IMR-90 (cell line): ENCODE measurements at regions of chr7 and their contacts with region 1.

Region 1: GRCh38 chr7:24757353-24758275 is at the start of gene GSDME:
- DNase-seq: peak; percentile 51
- ATAC-seq: peak; percentile 94
- H3K4me3 ChIP-seq: peak within 1 kb of the TSS; percentile 76
- H3K27ac ChIP-seq: peak within 1 kb of the TSS; percentile 86
- H3K4me1 ChIP-seq: peaks cover 13% of the 10 kb centered on the region
- H3K27me3 ChIP-seq: no peaks in the 10 kb centered on the region
- CTCF ChIP-seq: 0 out of 2 replicates have a peak, but pooled peaks have one; percentile 10
- POLR2A ChIP-seq: no peak
- RAD21 ChIP-seq: no peak
- total RNA-seq, gene GSDME: 78.7 and 88.3 TPM in 2 replicates

Region 2: GRCh38 chr7:24741691-24742504 is 15.7 kb before region 1 on chr7:
- CTCF ChIA-PET with region 1: no interaction called
- POLR2A ChIA-PET with region 1: no interaction called
- dilution Hi-C with region 1: no loop called
- in situ Hi-C with region 1: no loop called
- intact Hi-C with region 1: loop called (anchors 2 kb)
- DNase-seq: peak; percentile 99
- ATAC-seq: peak; percentile 98
- H3K4me3 ChIP-seq: no peak overlapping the region
- H3K27ac ChIP-seq: peak overlapping the region; percentile 92
- H3K4me1 ChIP-seq: peaks cover 18% of the 10 kb centered on the region
- H3K27me3 ChIP-seq: no peaks in the 10 kb centered on the region
- CTCF ChIP-seq: no peak
- POLR2A ChIP-seq: no peak
- RAD21 ChIP-seq: no peak; the same call in 1 of the 2 replicates

Region 3: GRCh38 chr7:25319707-25320106 is 562.1 kb after region 1 on chr7:
- CTCF ChIA-PET with region 1: no interaction called
- POLR2A ChIA-PET with region 1: no interaction called
- dilution Hi-C with region 1: no loop called
- in situ Hi-C with region 1: no loop called
- intact Hi-C with region 1: no loop called
- DNase-seq: no peak
- ATAC-seq: no peak
- H3K4me3 ChIP-seq: no peak overlapping the region
- H3K27ac ChIP-seq: no peak overlapping the region
- H3K4me1 ChIP-seq: no peaks in the 10 kb centered on the region
- H3K27me3 ChIP-seq: no peaks in the 10 kb centered on the region
- CTCF ChIP-seq: no peak
- POLR2A ChIP-seq: no peak
- RAD21 ChIP-seq: no peak

Region 4: DNA sequence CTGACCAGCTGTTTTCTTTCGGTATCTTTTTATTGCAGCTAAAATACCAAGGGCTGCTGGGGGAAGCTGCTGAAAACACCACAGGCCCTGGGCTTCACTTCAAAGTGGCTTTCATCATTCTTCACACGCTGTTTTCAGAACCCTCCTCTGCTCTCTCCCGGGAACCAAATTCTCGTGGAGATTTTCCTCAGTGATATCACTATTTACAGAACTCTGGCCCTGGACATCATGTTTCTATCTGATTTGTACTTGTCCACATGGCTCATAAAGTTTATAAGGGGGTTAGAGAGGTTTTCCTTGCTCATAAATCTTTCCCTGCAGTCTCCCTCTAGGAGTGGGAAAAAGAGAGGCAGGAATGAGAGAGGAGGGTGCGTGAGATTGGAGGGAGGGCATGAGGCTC is 648.1 kb after region 1 on chr7:
- CTCF ChIA-PET with region 1: no interaction called
- POLR2A ChIA-PET with region 1: no interaction called
- dilution Hi-C with region 1: no loop called
- in situ Hi-C with region 1: no loop called
- intact Hi-C with region 1: no loop called
- DNase-seq: no peak
- ATAC-seq: no peak
- H3K4me3 ChIP-seq: no peak overlapping the region
- H3K27ac ChIP-seq: no peak overlapping the region
- H3K4me1 ChIP-seq: no peaks in the 10 kb centered on the region
- H3K27me3 ChIP-seq: no peaks in the 10 kb centered on the region; the same call in 1 of the 2 replicates
- CTCF ChIP-seq: no peak
- POLR2A ChIP-seq: no peak
- RAD21 ChIP-seq: no peak